Ovary (tissue), 10 donors: ENCODE measurements at regions of chr2 and their contacts with region 1.

Region 1: GRCh38 chr2:71545572-71546274 is 92.4 kb downstream of the DYSF start:
- DNase-seq: peak; percentile 48 to 70 (median 64)
- H3K4me3 ChIP-seq: no peak overlapping the region
- H3K27ac ChIP-seq: no peak overlapping the region
- H3K4me1 ChIP-seq: peaks cover 2% of the 10 kb centered on the region
- H3K27me3 ChIP-seq: no peaks in the 10 kb centered on the region
- CTCF ChIP-seq: peak; percentile 33 to 54 (median 45)
- EP300 ChIP-seq: no peak
- POLR2A ChIP-seq: no peak

Region 2: DNA sequence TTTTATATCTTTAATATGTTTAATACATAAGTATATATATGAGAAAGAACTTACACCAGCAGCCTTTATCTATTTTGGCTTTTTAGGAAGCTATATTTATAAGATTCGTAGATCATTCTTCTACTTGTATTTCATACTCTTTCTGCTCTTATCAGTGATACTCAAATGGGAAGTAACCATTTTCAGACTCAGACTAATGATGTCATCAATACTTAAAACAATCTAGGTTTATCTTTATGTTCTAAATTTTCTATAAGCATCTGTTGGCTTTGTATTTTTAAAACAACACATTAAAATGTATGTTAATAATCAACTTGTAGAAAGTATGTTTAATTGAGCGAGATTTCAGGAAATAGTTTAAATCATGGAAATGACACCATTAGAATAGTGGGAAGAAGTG is 143.3 kb before region 1 on chr2:
- intact Hi-C with region 1: no loop called
- DNase-seq: no peak
- H3K4me3 ChIP-seq: no peak overlapping the region
- H3K27ac ChIP-seq: no peak overlapping the region
- H3K4me1 ChIP-seq: no peaks in the 10 kb centered on the region
- H3K27me3 ChIP-seq: no peaks in the 10 kb centered on the region
- CTCF ChIP-seq: no peak
- EP300 ChIP-seq: no peak
- POLR2A ChIP-seq: no peak

Region 3: GRCh38 chr2:71498261-71498701 is 47.4 kb before region 1 on chr2:
- intact Hi-C with region 1: no loop called
- DNase-seq: no peak
- H3K4me3 ChIP-seq: no peak overlapping the region
- H3K27ac ChIP-seq: no peak overlapping the region
- H3K4me1 ChIP-seq: peaks cover 1% of the 10 kb centered on the region
- H3K27me3 ChIP-seq: no peaks in the 10 kb centered on the region
- CTCF ChIP-seq: no peak
- EP300 ChIP-seq: no peak
- POLR2A ChIP-seq: no peak

Region 4: GRCh38 chr2:71618327-71619113 is 72.8 kb after region 1 on chr2:
- intact Hi-C with region 1: no loop called
- DNase-seq: peak in 1 of 5 donors; percentile 9
- H3K4me3 ChIP-seq: no peak overlapping the region
- H3K27ac ChIP-seq: no peak overlapping the region
- H3K4me1 ChIP-seq: peaks cover 5% of the 10 kb centered on the region
- H3K27me3 ChIP-seq: no peaks in the 10 kb centered on the region
- CTCF ChIP-seq: no peak
- EP300 ChIP-seq: no peak
- POLR2A ChIP-seq: no peak

Region 5: DNA sequence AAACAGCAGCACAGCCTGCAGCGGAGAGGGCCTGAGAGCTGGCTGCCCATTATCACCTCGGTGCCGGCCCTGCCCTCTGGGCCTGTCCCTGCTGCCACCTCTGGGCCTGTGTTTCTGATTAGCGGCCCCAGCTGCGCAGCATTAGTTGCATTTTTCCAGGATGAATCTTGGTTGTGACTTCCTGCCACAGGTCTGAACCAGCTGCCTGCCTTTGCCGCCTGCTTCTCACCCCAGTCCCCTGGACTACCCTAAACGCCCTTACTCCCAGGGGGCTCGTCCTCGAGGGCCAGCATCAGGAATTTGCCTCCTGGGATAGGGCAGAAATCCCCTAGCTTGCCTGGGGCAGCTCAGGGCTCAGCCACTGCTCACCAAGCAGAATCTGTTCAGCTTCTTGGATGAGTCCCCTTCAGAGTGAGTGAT is 250.5 kb after region 1 on chr2:
- intact Hi-C with region 1: loop called in 1 of 4 experiments (anchors 2 kb)
- DNase-seq: no peak
- H3K4me3 ChIP-seq: no peak overlapping the region
- H3K27ac ChIP-seq: no peak overlapping the region
- H3K4me1 ChIP-seq: no peaks in the 10 kb centered on the region
- H3K27me3 ChIP-seq: no peaks in the 10 kb centered on the region
- CTCF ChIP-seq: no peak
- EP300 ChIP-seq: no peak
- POLR2A ChIP-seq: no peak

Region 6: GRCh38 chr2:72150157-72150865 is 604.6 kb after region 1 on chr2:
- intact Hi-C with region 1: loop called (anchors 5 kb)
- DNase-seq: peak; percentile 69 to 81 (median 78)
- H3K4me3 ChIP-seq: no peak overlapping the region
- H3K27ac ChIP-seq: no peak overlapping the region
- H3K4me1 ChIP-seq: peaks cover 6% of the 10 kb centered on the region
- H3K27me3 ChIP-seq: no peaks in the 10 kb centered on the region
- CTCF ChIP-seq: peak; percentile 70 to 85 (median 79)
- EP300 ChIP-seq: no peak
- POLR2A ChIP-seq: no peak

Region 7: GRCh38 chr2:72579591-72580180 is 1034.0 kb after region 1 on chr2:
- intact Hi-C with region 1: loop called in 2 of 4 experiments (anchors 5 to 10 kb)
- DNase-seq: no peak
- H3K4me3 ChIP-seq: no peak overlapping the region
- H3K27ac ChIP-seq: no peak overlapping the region
- H3K4me1 ChIP-seq: peaks cover 2% of the 10 kb centered on the region
- H3K27me3 ChIP-seq: no peaks in the 10 kb centered on the region
- CTCF ChIP-seq: peak; percentile 25 to 51 (median 28)
- EP300 ChIP-seq: no peak
- POLR2A ChIP-seq: no peak

Region 8: GRCh38 chr2:72770879-72771461 is 1225.2 kb after region 1 on chr2:
- intact Hi-C with region 1: loop called in 1 of 4 experiments (anchors 10 kb)
- DNase-seq: peak in 3 of 5 donors; percentile 39 to 67 (median 43)
- H3K4me3 ChIP-seq: no peak overlapping the region
- H3K27ac ChIP-seq: no peak overlapping the region
- H3K4me1 ChIP-seq: no peaks in the 10 kb centered on the region
- H3K27me3 ChIP-seq: no peaks in the 10 kb centered on the region
- CTCF ChIP-seq: peak; percentile 53 to 81 (median 74)
- EP300 ChIP-seq: no peak
- POLR2A ChIP-seq: no peak

Region 9: GRCh38 chr2:72862239-72862988 is 1316.7 kb after region 1 on chr2:
- intact Hi-C with region 1: loop called in 1 of 4 experiments (anchors 10 kb)
- DNase-seq: peak; percentile 81 to 91 (median 87)
- H3K4me3 ChIP-seq: no peak overlapping the region
- H3K27ac ChIP-seq: no peak overlapping the region
- H3K4me1 ChIP-seq: no peaks in the 10 kb centered on the region
- H3K27me3 ChIP-seq: no peaks in the 10 kb centered on the region
- CTCF ChIP-seq: peak; percentile 84 to 99 (median 91)
- EP300 ChIP-seq: no peak
- POLR2A ChIP-seq: no peak

Region 10: DNA sequence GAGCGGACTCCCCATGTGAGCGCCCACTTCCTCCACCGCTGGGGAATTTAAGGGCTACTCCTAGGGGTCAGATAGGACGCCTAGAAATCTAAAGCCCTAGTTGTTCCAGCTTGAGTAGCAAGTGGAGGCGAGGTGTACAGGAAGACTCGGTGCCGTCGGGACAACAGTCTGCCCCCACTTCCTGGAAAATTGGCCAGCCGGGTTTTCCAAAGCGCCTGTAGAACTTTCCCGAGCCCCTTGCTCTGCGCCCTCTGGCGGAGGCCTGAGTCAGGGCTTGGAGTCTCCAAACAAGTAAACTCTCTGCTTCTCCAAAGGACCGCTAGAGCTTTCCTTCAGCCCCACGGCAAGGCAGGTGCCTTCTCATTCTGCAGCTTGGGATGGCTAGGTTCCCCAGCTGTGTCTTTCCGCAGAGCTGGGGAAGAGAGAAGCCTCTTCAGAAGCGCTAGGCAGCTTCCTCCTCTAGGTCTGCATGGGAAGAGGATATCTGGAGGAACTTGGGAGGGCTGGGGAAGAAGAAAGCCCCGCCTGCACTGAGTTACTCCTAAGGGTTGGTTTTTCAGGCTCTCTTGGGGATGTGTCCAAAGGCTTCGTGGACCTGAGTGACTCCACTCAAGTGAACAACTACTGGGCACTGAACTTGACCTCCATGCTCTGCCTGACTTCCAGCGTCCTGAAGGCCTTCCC is 1342.2 kb after region 1 on chr2:
- intact Hi-C with region 1: loop called in 1 of 4 experiments (anchors 10 kb)
- DNase-seq: peak; percentile 87 to 93 (median 90)
- H3K4me3 ChIP-seq: peak overlapping the region; percentile 47
- H3K27ac ChIP-seq: peak overlapping the region; percentile 74 to 79
- H3K4me1 ChIP-seq: peaks cover 7% of the 10 kb centered on the region
- H3K27me3 ChIP-seq: no peaks in the 10 kb centered on the region
- CTCF ChIP-seq: peak; percentile 68 to 80 (median 78)
- EP300 ChIP-seq: no peak
- POLR2A ChIP-seq: no peak